Activated T-helper 2 cell treated with anti-CD3 and anti-CD28 coated beads, Interferon-gamma antibody, Interleukin-2, Interleukin-4, amounts not matched to agents 10 μg/mL and 5 μg/mL and 100 μg/mL, durations not matched to agents 14 hours and 24 hours and 36 hours (primary cell): ENCODE measurements at regions of chr17 and their contacts with region 1.

Region 1: GRCh38 chr17:1331708-1332107 is 52.2 kb downstream of the TRARG1 start:
- DNase-seq: peak; percentile 31
- H3K4me3 Mint-ChIP-seq: no peak overlapping the region
- H3K27ac Mint-ChIP-seq: no peak overlapping the region
- H3K4me1 Mint-ChIP-seq: peaks cover 11% of the 10 kb centered on the region
- H3K27me3 Mint-ChIP-seq: peaks cover 1% of the 10 kb centered on the region

Region 2: GRCh38 chr17:1260086-1260769 is 71.5 kb before region 1 on chr17:
- intact Hi-C with region 1: loop called (anchors 1 kb)
- DNase-seq: no peak
- H3K4me3 Mint-ChIP-seq: peak overlapping the region; percentile 14
- H3K27ac Mint-ChIP-seq: no peak overlapping the region
- H3K4me1 Mint-ChIP-seq: peaks cover 14% of the 10 kb centered on the region
- H3K27me3 Mint-ChIP-seq: peaks cover 31% of the 10 kb centered on the region

Region 3: DNA sequence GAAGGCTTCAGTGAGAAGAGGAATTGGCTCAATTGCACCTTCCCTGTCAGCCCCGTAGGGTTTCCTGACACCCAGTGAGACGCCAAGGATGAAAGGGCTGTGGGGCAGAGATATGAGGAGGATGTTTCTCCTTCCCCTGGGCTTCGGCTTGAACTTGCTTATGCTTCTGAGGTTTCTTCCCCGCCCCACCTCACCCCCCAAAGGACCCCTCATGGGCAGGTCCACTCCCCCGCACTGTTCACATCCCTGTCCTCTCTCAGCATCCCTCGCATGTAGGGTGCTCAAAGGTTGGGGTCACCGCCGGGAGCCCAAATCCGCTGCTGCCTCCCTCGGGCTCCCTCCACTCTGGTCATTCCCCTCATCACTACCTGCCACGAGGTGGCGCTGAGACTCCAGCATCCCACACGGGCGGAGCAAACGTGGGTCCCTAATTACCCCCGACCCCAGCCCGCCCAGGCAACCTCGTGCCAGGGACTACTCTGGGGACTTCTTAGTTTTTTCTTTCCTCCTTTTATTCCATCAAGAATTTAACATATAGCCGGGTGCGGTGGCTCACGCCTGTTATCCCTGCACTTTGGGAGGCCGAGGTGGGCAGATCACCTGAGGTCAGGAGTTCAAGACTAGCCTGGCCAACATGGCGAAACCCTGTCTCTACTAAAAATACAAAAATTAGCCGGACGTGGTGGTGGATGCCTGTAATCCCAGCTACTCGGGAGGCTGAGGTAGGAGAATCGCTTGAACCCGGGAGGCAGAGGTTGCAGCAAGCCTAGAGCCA is 55.6 kb before region 1 on chr17:
- intact Hi-C with region 1: loop called (anchors 1 kb)
- DNase-seq: peak; percentile 60
- H3K4me3 Mint-ChIP-seq: no peak overlapping the region
- H3K27ac Mint-ChIP-seq: no peak overlapping the region
- H3K4me1 Mint-ChIP-seq: peaks cover 4% of the 10 kb centered on the region
- H3K27me3 Mint-ChIP-seq: peaks cover 33% of the 10 kb centered on the region